Naive thymus-derived CD4-positive, alpha-beta T cell (primary cell): ENCODE measurements at regions of chr14 and their contacts with region 1.

Region 1: GRCh38 chr14:91418387-91419043 is 895 bp upstream of the CCDC88C start:
- DNase-seq: peak; percentile 75 to 86 (median 82)
- ATAC-seq: peak; percentile 63
- H3K4me3 ChIP-seq: peak overlapping the region; percentile 52
- H3K4me3 Mint-ChIP-seq: peak overlapping the region; percentile 61 to 91 (median 84)
- H3K27ac ChIP-seq: peak overlapping the region; percentile 97
- H3K27ac Mint-ChIP-seq: peak overlapping the region; percentile 80 to 98 (median 91)
- H3K4me1 ChIP-seq: peaks cover 19 to 25% of the 10 kb centered on the region in 2 donors
- H3K4me1 Mint-ChIP-seq: peaks cover 22 to 42% (median 34%) of the 10 kb centered on the region in 7 donors
- H3K27me3 ChIP-seq: no peaks in the 10 kb centered on the region
- H3K27me3 Mint-ChIP-seq: peaks cover 0 to 7% (median 0%) of the 10 kb centered on the region in 5 donors

Region 2: DNA sequence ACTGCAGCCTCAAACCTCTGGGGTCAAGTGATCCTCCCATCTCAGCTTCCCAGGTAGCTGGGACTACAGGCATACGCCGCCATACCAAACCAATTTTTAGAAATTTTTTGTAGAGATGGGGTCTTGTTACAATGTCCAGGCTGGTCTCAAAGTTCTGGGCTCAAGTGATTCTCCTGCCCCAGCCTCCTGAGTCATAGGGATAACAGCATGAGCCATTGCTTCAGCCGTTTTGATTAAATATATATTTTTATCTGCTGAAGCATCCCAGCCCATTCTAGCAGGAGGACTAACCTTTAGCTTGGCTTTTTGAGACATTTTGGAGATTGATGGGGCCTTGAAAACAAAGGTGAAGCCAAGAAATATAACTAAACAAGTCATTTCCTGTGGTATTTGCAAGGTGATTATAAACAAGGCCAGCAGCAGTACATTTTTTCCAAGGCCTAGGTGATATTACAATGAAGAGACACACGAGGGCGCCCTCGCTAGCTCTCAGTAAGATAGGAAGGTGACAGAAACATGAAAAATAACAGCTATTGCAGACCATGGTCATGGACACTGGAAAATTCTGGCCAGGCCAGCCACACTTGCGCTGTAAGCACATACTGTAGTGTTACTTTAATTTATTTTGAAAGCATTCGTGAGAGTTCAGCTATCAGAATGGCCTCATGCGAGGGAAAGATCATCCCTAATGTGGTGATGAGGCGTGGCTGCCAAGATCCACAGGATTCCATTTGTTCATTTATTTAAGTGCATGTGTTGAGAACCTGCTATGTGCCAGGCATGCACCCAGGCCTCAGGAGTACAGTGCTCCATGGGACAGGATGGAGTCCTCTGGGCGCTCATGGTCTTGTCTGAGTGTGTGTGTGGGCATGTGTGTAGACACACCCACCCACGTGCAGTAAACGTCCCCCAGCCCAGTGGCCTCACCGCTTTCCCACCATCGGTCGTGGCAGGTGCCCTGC is 241.2 kb before region 1 on chr14:
- CTCF ChIA-PET with region 1: interaction called, 3 read pairs
- POLR2A ChIA-PET with region 1: interaction called, 3 read pairs
- intact Hi-C with region 1: loop called (anchors 1 to 5 kb)
- DNase-seq: peak; percentile 30 to 80 (median 68)
- ATAC-seq: peak; percentile 91
- H3K4me3 ChIP-seq: no peak overlapping the region
- H3K4me3 Mint-ChIP-seq: peak overlapping the region in 1 of 10 donors; percentile 8
- H3K27ac ChIP-seq: peak overlapping the region; percentile 44
- H3K27ac Mint-ChIP-seq: peak overlapping the region in 8 of 9 donors; percentile 12 to 85 (median 68)
- H3K4me1 ChIP-seq: peaks cover 0 to 8% of the 10 kb centered on the region in 2 donors
- H3K4me1 Mint-ChIP-seq: peaks cover 6 to 29% (median 13%) of the 10 kb centered on the region in 7 donors
- H3K27me3 ChIP-seq: no peaks in the 10 kb centered on the region
- H3K27me3 Mint-ChIP-seq: no peaks in the 10 kb centered on the region

Region 3: GRCh38 chr14:91311284-91311662 is 107.2 kb before region 1 on chr14:
- CTCF ChIA-PET with region 1: interaction called, 7 read pairs
- POLR2A ChIA-PET with region 1: interaction called, 15 read pairs
- intact Hi-C with region 1: loop called (anchors 1 kb)
- DNase-seq: peak in 7 of 9 donors; percentile 52 to 70 (median 63)
- ATAC-seq: peak; percentile 74
- H3K4me3 ChIP-seq: peak overlapping the region; percentile 17
- H3K4me3 Mint-ChIP-seq: peak overlapping the region; percentile 7 to 79 (median 68)
- H3K27ac ChIP-seq: peak overlapping the region; percentile 68
- H3K27ac Mint-ChIP-seq: peak overlapping the region; percentile 74 to 99 (median 94)
- H3K4me1 ChIP-seq: peaks cover 38 to 41% of the 10 kb centered on the region in 2 donors
- H3K4me1 Mint-ChIP-seq: peaks cover 42 to 84% (median 66%) of the 10 kb centered on the region in 7 donors
- H3K27me3 ChIP-seq: no peaks in the 10 kb centered on the region
- H3K27me3 Mint-ChIP-seq: no peaks in the 10 kb centered on the region

Region 4: GRCh38 chr14:91350813-91351511 is 67.6 kb before region 1 on chr14:
- CTCF ChIA-PET with region 1: interaction called, 14 read pairs
- POLR2A ChIA-PET with region 1: interaction called, 150 read pairs
- intact Hi-C with region 1: loop called (anchors 1 kb)
- DNase-seq: peak in 8 of 9 donors; percentile 55 to 82 (median 72)
- ATAC-seq: peak; percentile 75
- H3K4me3 ChIP-seq: peak overlapping the region; percentile 31
- H3K4me3 Mint-ChIP-seq: peak overlapping the region; percentile 80 to 97 (median 89)
- H3K27ac ChIP-seq: peak overlapping the region; percentile 75
- H3K27ac Mint-ChIP-seq: peak overlapping the region; percentile 86 to 98 (median 95)
- H3K4me1 ChIP-seq: peaks cover 71 to 77% of the 10 kb centered on the region in 2 donors
- H3K4me1 Mint-ChIP-seq: peaks cover 78 to 97% (median 89%) of the 10 kb centered on the region in 7 donors
- H3K27me3 ChIP-seq: no peaks in the 10 kb centered on the region
- H3K27me3 Mint-ChIP-seq: no peaks in the 10 kb centered on the region

Region 5: DNA sequence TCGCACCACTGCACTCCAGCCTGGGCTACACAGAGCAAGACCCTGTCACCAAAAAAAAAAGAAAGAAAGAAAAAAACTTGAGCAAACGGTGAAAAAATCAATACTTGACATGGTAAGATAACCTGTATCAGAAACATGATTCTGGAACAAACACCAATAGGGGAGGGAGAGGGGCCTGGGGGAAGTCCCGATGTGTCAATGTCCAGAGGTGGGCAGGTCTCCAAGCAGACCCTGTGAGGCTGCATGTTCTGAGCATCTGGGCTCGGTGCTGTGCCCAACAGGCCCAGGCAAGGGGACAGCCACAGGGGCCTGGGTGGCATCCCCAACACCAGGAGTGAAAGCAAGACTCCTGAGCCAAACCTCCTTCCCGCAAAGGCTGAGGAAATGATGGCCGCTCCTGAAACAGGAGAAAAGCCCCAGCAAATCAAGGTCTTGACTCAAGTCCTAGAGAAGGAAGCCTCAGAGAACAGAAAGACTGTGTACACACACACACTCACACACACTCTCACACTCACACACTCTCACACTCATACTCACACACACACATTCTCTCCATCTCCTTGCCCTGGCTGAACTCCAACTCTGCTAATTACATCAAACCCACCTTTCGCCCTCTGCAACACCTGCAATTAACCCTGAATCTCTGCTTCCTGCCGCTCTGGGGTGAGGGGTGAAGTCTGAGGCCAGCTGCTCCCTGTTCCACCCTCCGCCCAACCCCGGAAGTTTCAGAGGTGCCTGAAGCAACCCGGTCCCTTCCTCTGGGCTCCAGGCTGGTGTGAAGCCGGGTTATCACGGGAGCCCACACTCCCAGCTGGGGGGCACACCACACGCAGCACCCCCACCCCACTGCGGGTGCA is 21.3 kb before region 1 on chr14:
- CTCF ChIA-PET with region 1: interaction called, 30 read pairs
- POLR2A ChIA-PET with region 1: interaction called, 328 read pairs
- intact Hi-C with region 1: loop called (anchors 1 kb)
- DNase-seq: peak in 8 of 9 donors; percentile 61 to 77 (median 71)
- ATAC-seq: peak; percentile 68
- H3K4me3 ChIP-seq: peak overlapping the region; percentile 43
- H3K4me3 Mint-ChIP-seq: peak overlapping the region; percentile 73 to 99 (median 86)
- H3K27ac ChIP-seq: peak overlapping the region; percentile 76
- H3K27ac Mint-ChIP-seq: peak overlapping the region; percentile 77 to 99 (median 89)
- H3K4me1 ChIP-seq: peaks cover 88 to 90% of the 10 kb centered on the region in 2 donors
- H3K4me1 Mint-ChIP-seq: peaks cover 80 to 98% (median 91%) of the 10 kb centered on the region in 7 donors
- H3K27me3 ChIP-seq: no peaks in the 10 kb centered on the region
- H3K27me3 Mint-ChIP-seq: no peaks in the 10 kb centered on the region

Region 6: DNA sequence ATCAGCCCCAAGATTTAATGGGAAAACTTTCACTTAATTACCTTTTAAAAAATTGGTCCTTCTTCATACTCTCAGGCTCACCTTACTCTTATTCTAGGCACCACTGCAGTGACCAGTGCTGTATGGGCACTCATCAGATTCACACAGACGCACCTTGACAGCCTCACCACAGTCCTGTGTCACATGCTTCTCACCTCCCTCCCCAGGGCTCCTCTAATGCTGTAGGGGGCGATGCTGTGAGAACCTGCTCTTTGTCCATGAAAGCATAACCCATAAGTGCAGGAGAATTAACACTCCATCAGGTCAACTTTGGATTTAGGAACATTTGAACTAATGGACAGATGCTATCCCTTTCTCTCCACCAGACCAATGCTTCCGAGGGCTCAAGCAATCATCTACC is 105.5 kb after region 1 on chr14:
- CTCF ChIA-PET with region 1: no interaction called
- POLR2A ChIA-PET with region 1: no interaction called
- intact Hi-C with region 1: no loop called
- DNase-seq: no peak
- ATAC-seq: no peak
- H3K4me3 ChIP-seq: no peak overlapping the region
- H3K4me3 Mint-ChIP-seq: no peak overlapping the region
- H3K27ac ChIP-seq: no peak overlapping the region
- H3K27ac Mint-ChIP-seq: no peak overlapping the region
- H3K4me1 ChIP-seq: no peaks in the 10 kb centered on the region
- H3K4me1 Mint-ChIP-seq: peaks cover 0 to 3% (median 0%) of the 10 kb centered on the region in 7 donors
- H3K27me3 ChIP-seq: no peaks in the 10 kb centered on the region
- H3K27me3 Mint-ChIP-seq: peaks cover 0 to 10% (median 0%) of the 10 kb centered on the region in 5 donors